Heart left ventricle (tissue), 16 donors: ENCODE measurements at regions of chr19 and their contacts with region 1.

Region 1: DNA sequence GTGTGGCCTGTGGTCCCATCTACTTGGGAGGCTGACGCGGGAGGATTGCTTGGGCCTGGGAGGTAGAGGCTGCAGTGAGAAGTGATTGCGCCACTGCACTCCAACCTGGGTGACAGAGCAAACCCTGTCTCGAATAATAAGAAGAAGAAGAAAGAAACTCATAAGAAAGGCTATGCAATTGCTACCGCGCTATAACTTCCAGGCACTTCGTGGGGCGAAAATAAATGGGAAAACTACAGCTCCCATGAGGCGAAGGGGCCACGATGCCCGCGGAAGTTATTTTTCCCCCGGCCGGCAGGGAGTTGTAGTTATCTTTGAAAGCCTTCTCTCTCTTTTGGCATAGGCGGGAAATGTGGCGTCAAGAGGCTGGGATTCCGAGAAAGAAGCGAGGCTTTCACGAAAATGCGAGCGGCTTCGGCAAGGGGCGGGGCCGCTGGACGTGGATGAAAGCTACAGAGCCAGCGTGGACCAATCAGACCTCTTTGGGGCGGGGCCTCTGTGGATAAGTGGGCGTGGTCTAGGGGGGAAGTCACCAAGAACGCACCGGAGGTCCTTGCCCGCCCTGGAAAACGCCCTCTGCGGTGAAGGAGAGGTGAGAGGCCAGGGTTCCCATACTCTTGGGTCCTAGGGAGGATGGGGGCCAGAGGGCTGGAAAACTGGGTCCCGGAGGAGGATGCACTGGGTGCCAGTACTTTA is at the start of gene NUCB1:
- DNase-seq: peak; percentile 98 to 99 (median 99)
- ATAC-seq: peak; percentile 97 to 98 (median 98)
- H3K4me3 ChIP-seq: peak within 1 kb of the TSS; percentile 69 to 98 (median 92)
- H3K27ac ChIP-seq: peak within 1 kb of the TSS; percentile 77 to 98 (median 94)
- H3K4me1 ChIP-seq: peaks cover 2 to 53% (median 34%) of the 10 kb centered on the region in 12 donors
- H3K27me3 ChIP-seq: peaks cover 0 to 13% (median 0%) of the 10 kb centered on the region in 9 donors
- CTCF ChIP-seq: peak; percentile 2 to 50 (median 23)
- POLR2A ChIP-seq: peak in 1 of 2 donors; percentile 84
- total RNA-seq, gene NUCB1: 200 to 428 (median 286) TPM

Region 2: GRCh38 chr19:48872182-48872883 is 27.6 kb before region 1 on chr19 and contains the start of gene PPP1R15A:
- intact Hi-C with region 1: loop called in 4 of 10 experiments (anchors 1 to 2 kb)
- DNase-seq: peak; percentile 97 to 99 (median 97)
- ATAC-seq: peak; percentile 62 to 82 (median 72)
- H3K4me3 ChIP-seq: peak within 1 kb of the TSS; percentile 75 to 99 (median 89)
- H3K27ac ChIP-seq: peak within 1 kb of the TSS; percentile 98 to 100 (median 100)
- H3K4me1 ChIP-seq: peaks cover 11 to 60% (median 41%) of the 10 kb centered on the region in 12 donors
- H3K27me3 ChIP-seq: no peaks in the 10 kb centered on the region
- CTCF ChIP-seq: peak in 3 of 12 donors; percentile 7 to 19 (median 10)
- POLR2A ChIP-seq: peak; percentile 93 to 99
- total RNA-seq, gene PPP1R15A: 51.7 to 88.2 (median 62.6) TPM

Region 3: DNA sequence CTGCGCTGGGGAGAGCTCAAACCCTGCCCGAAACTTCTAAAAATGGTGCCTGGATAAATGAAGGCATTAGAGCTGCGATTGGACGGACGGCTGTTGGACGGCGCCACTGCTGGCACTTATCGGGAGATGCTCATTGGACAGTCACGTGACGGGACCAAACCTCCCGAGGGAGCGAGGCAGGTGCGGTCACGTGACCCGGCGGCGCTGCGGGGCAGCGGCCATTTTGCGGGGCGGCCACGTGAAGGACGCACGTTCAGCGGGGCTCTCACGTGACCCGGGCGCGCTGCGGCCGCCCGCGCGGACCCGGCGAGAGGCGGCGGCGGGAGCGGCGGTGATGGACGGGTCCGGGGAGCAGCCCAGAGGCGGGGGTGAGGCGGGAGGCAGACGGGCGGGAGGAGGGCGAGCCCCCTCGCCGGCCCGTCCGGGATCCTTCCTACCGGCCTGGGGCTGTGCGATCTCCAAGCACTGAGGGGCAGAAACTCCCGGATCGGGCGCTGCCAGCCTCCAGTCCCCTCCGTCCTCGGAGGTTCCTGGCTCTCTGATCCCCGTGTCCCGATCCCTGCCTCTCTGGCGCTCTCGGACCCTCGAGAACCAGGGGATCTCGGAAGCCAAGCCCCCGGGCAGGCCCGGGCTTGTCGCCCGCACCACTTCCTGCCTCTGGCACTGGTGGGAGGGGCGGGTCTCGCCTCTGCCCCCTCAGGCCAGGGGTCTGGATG is 54.8 kb after region 1 on chr19 and contains the start of gene BAX:
- intact Hi-C with region 1: loop called in 3 of 10 experiments (anchors 2 to 10 kb)
- DNase-seq: peak; percentile 97 to 99 (median 98)
- ATAC-seq: peak; percentile 82 to 95 (median 90)
- H3K4me3 ChIP-seq: peak within 1 kb of the TSS; percentile 77 to 98 (median 90)
- H3K27ac ChIP-seq: peak within 1 kb of the TSS; percentile 69 to 95 (median 89)
- H3K4me1 ChIP-seq: peaks cover 4 to 23% (median 14%) of the 10 kb centered on the region in 12 donors
- H3K27me3 ChIP-seq: no peaks in the 10 kb centered on the region
- CTCF ChIP-seq: peak in 1 of 12 donors; percentile 7
- POLR2A ChIP-seq: peak in 1 of 2 donors; percentile 87
- total RNA-seq, gene BAX: 17.9 to 68.4 (median 23.1) TPM

Region 4: DNA sequence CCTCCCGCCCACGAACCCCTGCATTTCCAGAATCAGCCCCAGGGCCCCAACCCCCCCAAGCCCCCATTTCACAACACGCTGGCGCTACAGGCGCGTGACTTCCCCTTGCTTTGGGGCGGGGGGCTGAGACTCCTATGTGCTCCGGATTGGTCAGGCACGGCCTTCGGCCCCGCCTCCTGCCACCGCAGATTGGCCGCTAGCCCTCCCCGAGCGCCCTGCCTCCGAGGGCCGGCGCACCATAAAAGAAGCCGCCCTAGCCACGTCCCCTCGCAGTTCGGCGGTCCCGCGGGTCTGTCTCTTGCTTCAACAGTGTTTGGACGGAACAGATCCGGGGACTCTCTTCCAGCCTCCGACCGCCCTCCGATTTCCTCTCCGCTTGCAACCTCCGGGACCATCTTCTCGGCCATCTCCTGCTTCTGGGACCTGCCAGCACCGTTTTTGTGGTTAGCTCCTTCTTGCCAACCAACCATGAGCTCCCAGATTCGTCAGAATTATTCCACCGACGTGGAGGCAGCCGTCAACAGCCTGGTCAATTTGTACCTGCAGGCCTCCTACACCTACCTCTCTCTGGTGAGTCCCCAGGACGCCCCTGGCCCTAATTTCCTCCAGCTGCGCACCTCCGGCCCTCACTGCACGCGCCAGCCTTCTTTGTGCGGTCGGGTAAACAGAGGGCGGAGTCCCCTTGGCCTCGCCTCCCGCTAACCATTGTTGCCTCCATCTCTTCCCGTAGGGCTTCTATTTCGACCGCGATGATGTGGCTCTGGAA is 65.3 kb after region 1 on chr19 and contains the start of gene FTL:
- intact Hi-C with region 1: loop called in 3 of 10 experiments (anchors 5 to 10 kb)
- DNase-seq: peak; percentile 98 to 99 (median 98)
- ATAC-seq: peak; percentile 85 to 92 (median 88)
- H3K4me3 ChIP-seq: peak within 1 kb of the TSS; percentile 61 to 99 (median 88)
- H3K27ac ChIP-seq: peak within 1 kb of the TSS; percentile 73 to 97 (median 93)
- H3K4me1 ChIP-seq: peaks cover 10 to 65% (median 47%) of the 10 kb centered on the region in 12 donors
- H3K27me3 ChIP-seq: no peaks in the 10 kb centered on the region
- CTCF ChIP-seq: no peak
- POLR2A ChIP-seq: peak; percentile 98 to 100
- total RNA-seq, gene FTL: 484 to 6,770 (median 857) TPM

Region 5: DNA sequence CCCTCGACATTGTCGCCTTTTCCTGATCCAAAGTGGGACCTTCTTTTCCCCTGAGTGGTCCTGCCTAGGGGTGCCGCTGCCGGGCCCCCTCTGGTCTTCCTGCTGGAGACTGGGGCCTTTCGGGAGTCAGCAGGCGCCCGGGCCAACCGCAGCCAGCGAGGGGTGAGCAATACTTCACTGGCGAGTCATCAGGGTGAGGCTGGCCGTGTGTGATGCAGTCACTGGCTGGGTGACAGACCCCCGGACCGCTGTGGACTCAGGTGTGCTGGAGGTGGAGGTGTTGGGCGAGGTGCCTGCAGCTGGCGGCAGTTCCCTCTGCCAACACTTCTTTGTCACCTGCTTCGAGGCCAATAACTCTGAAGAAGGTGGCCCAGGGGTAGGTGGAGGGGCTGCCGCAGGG is 142.2 kb after region 1 on chr19:
- intact Hi-C with region 1: no loop called
- DNase-seq: no peak
- ATAC-seq: no peak
- H3K4me3 ChIP-seq: no peak overlapping the region
- H3K27ac ChIP-seq: no peak overlapping the region
- H3K4me1 ChIP-seq: no peaks in the 10 kb centered on the region
- H3K27me3 ChIP-seq: no peaks in the 10 kb centered on the region
- CTCF ChIP-seq: no peak
- POLR2A ChIP-seq: no peak